ENCODE measurements at regions of chr5 and their contacts with region 1.

Region 1: GRCh38 chr5:134904630-134905245 is at the start of gene PCBD2:
- DNase-seq: peak; percentile 89 to 92
- H3K4me3 ChIP-seq: peak within 1 kb of the TSS; percentile 68 to 92 (median 75)
- H3K27ac ChIP-seq: peak within 1 kb of the TSS; percentile 83 to 98 (median 84)
- H3K4me1 ChIP-seq: no peaks in the 10 kb centered on the region
- H3K27me3 ChIP-seq: no peaks in the 10 kb centered on the region
- CTCF ChIP-seq: peak; percentile 56 to 98 (median 84)
- POLR2A ChIP-seq: peak in 1 of 2 donors; percentile 60
- total RNA-seq, gene PCBD2: 12.6 to 24.4 (median 17.7) TPM

Region 2: GRCh38 chr5:134738133-134738962 is 166.4 kb before region 1 on chr5 and contains the start of gene CAMLG:
- intact Hi-C with region 1: loop called (anchors 10 kb)
- DNase-seq: peak; percentile 98
- H3K4me3 ChIP-seq: peak within 1 kb of the TSS; percentile 50 to 65 (median 57)
- H3K27ac ChIP-seq: peak within 1 kb of the TSS; percentile 86 to 93 (median 91)
- H3K4me1 ChIP-seq: peaks cover 10 to 17% of the 10 kb centered on the region in 2 donors
- H3K27me3 ChIP-seq: no peaks in the 10 kb centered on the region
- CTCF ChIP-seq: peak in 5 of 6 experiments; percentile 19 to 55 (median 46)
- POLR2A ChIP-seq: peak in 1 of 2 donors; percentile 93
- total RNA-seq, gene CAMLG: 20.7 to 64.9 (median 29.3) TPM

Region 3: GRCh38 chr5:134845852-134846640 is 58.7 kb before region 1 on chr5 and contains the start of gene C5orf24:
- intact Hi-C with region 1: loop called (anchors 10 kb)
- DNase-seq: peak; percentile 96 to 97
- H3K4me3 ChIP-seq: peak within 1 kb of the TSS; percentile 2 to 82 (median 58)
- H3K27ac ChIP-seq: peak within 1 kb of the TSS; percentile 85 to 90 (median 88)
- H3K4me1 ChIP-seq: peaks cover 11 to 22% of the 10 kb centered on the region in 2 donors
- H3K27me3 ChIP-seq: no peaks in the 10 kb centered on the region
- CTCF ChIP-seq: no peak
- POLR2A ChIP-seq: peak; percentile 62 to 99
- total RNA-seq, gene C5orf24: 52.5 to 66.6 (median 61.0) TPM